ENCODE measurements at regions of chr1 and their contacts with region 1.

Region 1: DNA sequence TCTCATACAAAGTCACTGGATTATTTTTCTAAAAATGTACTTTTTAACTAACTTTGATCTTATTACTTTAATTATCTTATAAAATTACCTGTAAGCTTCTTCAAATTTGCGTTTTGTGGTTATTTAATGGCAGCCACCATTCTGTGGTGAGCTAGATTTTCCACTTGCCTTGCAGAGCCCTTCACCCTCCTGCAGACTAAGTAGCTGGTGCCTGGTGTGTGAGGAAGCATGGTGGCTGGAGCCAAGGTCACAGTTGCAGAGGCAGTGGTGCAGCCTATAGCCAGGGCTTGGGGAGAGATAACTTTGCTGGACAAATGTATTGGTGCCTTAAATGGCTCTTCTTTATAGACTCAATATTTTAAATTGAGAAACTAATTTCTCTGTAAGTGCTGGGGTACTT is 11.2 kb upstream of the CD84 start:
- DNase-seq: no peak
- ATAC-seq: no peak
- H3K4me3 ChIP-seq: no peak overlapping the region
- H3K4me3 Mint-ChIP-seq: no peak overlapping the region
- H3K27ac ChIP-seq: no peak overlapping the region
- H3K27ac Mint-ChIP-seq: no peak overlapping the region
- H3K4me1 ChIP-seq: peaks cover 0 to 6% of the 10 kb centered on the region in 2 donors
- H3K4me1 Mint-ChIP-seq: peaks cover 9% of the 10 kb centered on the region
- H3K27me3 ChIP-seq: no peaks in the 10 kb centered on the region
- H3K27me3 Mint-ChIP-seq: no peaks in the 10 kb centered on the region
- CTCF ChIP-seq: no peak

Region 2: DNA sequence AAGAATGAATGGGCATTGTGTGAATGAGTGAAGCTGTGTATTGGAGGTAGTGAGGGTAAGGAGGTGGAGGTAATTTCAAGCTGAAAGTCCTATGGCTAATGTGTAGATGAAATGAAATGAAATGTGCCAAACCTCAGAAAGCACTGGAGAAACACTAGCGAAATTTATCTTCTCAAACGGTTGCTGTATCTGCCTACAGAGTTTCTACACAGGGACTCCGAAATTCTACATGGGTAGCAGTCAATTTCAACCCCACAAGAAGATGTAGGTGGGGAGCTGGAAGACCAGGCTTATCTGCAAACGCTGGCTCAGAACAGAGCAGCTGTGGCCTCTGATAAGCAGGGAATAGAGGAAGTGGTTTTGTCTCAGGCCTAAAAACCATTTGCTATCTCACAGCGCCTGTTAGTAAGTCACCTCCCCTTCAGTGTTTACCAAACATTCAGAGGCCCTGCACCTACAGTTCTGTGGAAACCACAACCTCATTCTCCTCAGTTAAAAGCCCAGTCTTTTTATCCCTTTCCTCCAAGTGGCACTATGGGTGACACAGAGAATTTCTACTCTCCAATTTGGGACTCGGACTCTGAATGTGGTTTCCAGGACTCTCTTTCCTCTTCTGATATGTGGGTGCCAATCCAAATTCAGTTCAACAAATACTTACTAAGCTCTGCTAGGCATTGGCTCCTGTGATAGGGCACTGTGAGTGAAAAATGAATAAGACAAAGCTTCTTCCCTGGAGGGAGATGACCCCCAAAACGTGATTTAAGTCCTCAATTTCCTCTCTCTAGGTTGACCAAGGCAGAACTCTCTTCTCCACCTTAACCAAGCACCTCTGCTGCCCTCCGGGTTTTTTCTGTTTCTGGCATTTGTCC is 50.3 kb before region 1 on chr1:
- CTCF ChIA-PET with region 1: interaction called, 6 read pairs
- POLR2A ChIA-PET with region 1: no interaction called
- intact Hi-C with region 1: loop called (anchors 5 kb)
- DNase-seq: peak; percentile 81
- ATAC-seq: peak; percentile 97
- H3K4me3 ChIP-seq: peak overlapping the region in 1 of 5 experiments; percentile 19
- H3K4me3 Mint-ChIP-seq: peak overlapping the region; percentile 63
- H3K27ac ChIP-seq: peak overlapping the region; percentile 72 to 90
- H3K27ac Mint-ChIP-seq: peak overlapping the region; percentile 93
- H3K4me1 ChIP-seq: peaks cover 46% of the 10 kb centered on the region in 2 donors
- H3K4me1 Mint-ChIP-seq: peaks cover 48% of the 10 kb centered on the region
- H3K27me3 ChIP-seq: no peaks in the 10 kb centered on the region
- H3K27me3 Mint-ChIP-seq: no peaks in the 10 kb centered on the region
- CTCF ChIP-seq: no peak

Region 3: GRCh38 chr1:160558660-160559380 is 31.7 kb before region 1 on chr1:
- CTCF ChIA-PET with region 1: no interaction called
- POLR2A ChIA-PET with region 1: interaction called, 10 read pairs
- intact Hi-C with region 1: no loop called
- DNase-seq: no peak
- ATAC-seq: no peak
- H3K4me3 ChIP-seq: no peak overlapping the region
- H3K4me3 Mint-ChIP-seq: peak overlapping the region; percentile 10
- H3K27ac ChIP-seq: peak overlapping the region in 1 of 2 donors; percentile 13
- H3K27ac Mint-ChIP-seq: peak overlapping the region; percentile 22
- H3K4me1 ChIP-seq: peaks cover 14 to 23% of the 10 kb centered on the region in 2 donors
- H3K4me1 Mint-ChIP-seq: peaks cover 55% of the 10 kb centered on the region
- H3K27me3 ChIP-seq: no peaks in the 10 kb centered on the region
- H3K27me3 Mint-ChIP-seq: no peaks in the 10 kb centered on the region
- CTCF ChIP-seq: no peak

Region 4: DNA sequence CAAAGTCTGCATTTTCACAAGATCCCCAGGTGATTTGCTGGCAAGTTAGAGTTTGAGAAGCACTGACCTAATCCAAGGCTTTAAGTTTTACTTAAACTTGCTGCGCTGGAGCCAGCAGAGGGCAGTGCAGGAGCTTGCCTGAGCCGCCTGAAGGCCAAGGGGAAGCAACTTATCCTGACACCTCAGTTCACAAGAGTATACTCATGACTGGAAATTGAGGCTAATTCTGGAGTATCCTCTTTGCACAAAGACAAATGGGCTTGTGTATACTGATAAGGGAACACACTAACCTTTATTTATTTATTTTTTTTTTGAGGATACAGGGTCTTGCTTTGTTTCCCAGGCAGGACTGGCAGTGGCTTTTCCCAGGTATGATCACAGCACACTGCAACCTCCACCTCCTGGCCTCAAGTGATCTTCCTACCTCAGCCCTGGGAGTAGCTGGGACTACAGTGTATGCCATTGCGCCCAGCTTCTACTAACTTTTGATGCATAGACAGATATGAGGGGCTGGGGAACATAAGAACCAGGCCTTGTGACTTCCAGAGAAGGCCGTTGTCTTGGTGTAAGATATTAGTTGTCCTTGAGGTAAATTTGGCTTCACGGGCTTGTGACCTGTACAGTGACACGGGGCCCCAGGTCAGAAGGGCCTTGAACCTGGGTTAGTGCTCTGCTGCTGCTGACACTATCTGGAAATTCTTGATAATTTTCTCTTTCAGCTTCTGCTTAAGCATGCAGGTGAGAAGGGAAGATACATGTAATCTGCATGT is 85.3 kb after region 1 on chr1:
- CTCF ChIA-PET with region 1: no interaction called
- POLR2A ChIA-PET with region 1: no interaction called
- intact Hi-C with region 1: no loop called
- DNase-seq: peak; percentile 83
- ATAC-seq: peak; percentile 81
- H3K4me3 ChIP-seq: no peak overlapping the region
- H3K4me3 Mint-ChIP-seq: peak overlapping the region; percentile 43
- H3K27ac ChIP-seq: peak overlapping the region in 1 of 2 donors; percentile 61
- H3K27ac Mint-ChIP-seq: peak overlapping the region; percentile 81
- H3K4me1 ChIP-seq: peaks cover 48 to 52% of the 10 kb centered on the region in 2 donors
- H3K4me1 Mint-ChIP-seq: peaks cover 16% of the 10 kb centered on the region
- H3K27me3 ChIP-seq: no peaks in the 10 kb centered on the region
- H3K27me3 Mint-ChIP-seq: no peaks in the 10 kb centered on the region
- CTCF ChIP-seq: peak; percentile 86

Measured in B cell (primary cell).